ENCODE measurements at regions of chr11 and their contacts with region 1.

Region 1: GRCh38 chr11:60345489-60345888 is 18.4 kb downstream of the MS4A6E start:
- DNase-seq: peak; percentile 63
- H3K4me3 Mint-ChIP-seq: no peak overlapping the region
- H3K27ac Mint-ChIP-seq: no peak overlapping the region
- H3K4me1 Mint-ChIP-seq: no peaks in the 10 kb centered on the region
- H3K27me3 Mint-ChIP-seq: peaks cover 35% of the 10 kb centered on the region
- CTCF ChIP-seq: peak; percentile 56

Region 2: GRCh38 chr11:59866397-59866796 is 479.1 kb before region 1 on chr11 and contains the start of gene TCN1:
- CTCF ChIA-PET with region 1: no interaction called
- intact Hi-C with region 1: no loop called
- DNase-seq: peak; percentile 71
- H3K4me3 Mint-ChIP-seq: peak within 1 kb of the TSS; percentile 69
- H3K27ac Mint-ChIP-seq: peak within 1 kb of the TSS; percentile 92
- H3K4me1 Mint-ChIP-seq: peaks cover 18% of the 10 kb centered on the region
- H3K27me3 Mint-ChIP-seq: no peaks in the 10 kb centered on the region
- CTCF ChIP-seq: no peak
- total RNA-seq, gene TCN1: 335 and 428 TPM in 2 replicates

Region 3: GRCh38 chr11:60175860-60176275 is 169.6 kb before region 1 on chr11:
- CTCF ChIA-PET with region 1: no interaction called
- intact Hi-C with region 1: loop called (anchors 10 kb)
- DNase-seq: no peak
- H3K4me3 Mint-ChIP-seq: no peak overlapping the region
- H3K27ac Mint-ChIP-seq: no peak overlapping the region
- H3K4me1 Mint-ChIP-seq: peaks cover 51% of the 10 kb centered on the region
- H3K27me3 Mint-ChIP-seq: no peaks in the 10 kb centered on the region
- CTCF ChIP-seq: no peak

Region 4: DNA sequence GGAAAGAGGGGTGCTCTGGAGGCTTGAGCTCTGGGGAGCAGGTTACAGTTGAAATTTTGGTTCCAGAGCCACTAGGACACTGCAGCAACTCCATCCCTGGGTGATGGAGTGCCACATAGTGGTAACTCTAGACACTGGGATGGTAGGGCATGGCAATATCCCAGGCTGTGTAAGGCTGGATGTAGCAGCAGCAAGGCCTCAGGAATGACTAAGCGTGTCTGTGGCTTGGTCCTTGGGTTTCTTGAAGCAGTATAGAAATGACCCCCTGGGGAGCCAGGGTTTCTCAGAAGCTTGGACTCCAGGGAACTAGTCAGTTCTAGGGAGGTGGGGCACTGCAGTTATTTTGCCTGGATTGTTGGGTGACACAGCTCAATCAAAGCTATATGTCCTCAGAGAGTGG is 57.0 kb before region 1 on chr11:
- CTCF ChIA-PET with region 1: no interaction called
- intact Hi-C with region 1: no loop called
- DNase-seq: no peak
- H3K4me3 Mint-ChIP-seq: no peak overlapping the region
- H3K27ac Mint-ChIP-seq: no peak overlapping the region
- H3K4me1 Mint-ChIP-seq: peaks cover 8% of the 10 kb centered on the region
- H3K27me3 Mint-ChIP-seq: no peaks in the 10 kb centered on the region
- CTCF ChIP-seq: no peak